B cell (primary cell): ENCODE measurements at regions of chr21 and their contacts with region 1.

Region 1: GRCh38 chr21:14864211-14865021 is 200.4 kb downstream of the NRIP1 start:
- DNase-seq: peak; percentile 41
- ATAC-seq: peak; percentile 72
- H3K4me3 ChIP-seq: no peak overlapping the region
- H3K4me3 Mint-ChIP-seq: no peak overlapping the region
- H3K27ac ChIP-seq: no peak overlapping the region
- H3K27ac Mint-ChIP-seq: no peak overlapping the region
- H3K4me1 ChIP-seq: peaks cover 13 to 17% of the 10 kb centered on the region in 2 donors
- H3K4me1 Mint-ChIP-seq: peaks cover 42% of the 10 kb centered on the region
- H3K27me3 ChIP-seq: no peaks in the 10 kb centered on the region
- H3K27me3 Mint-ChIP-seq: no peaks in the 10 kb centered on the region
- CTCF ChIP-seq: peak; percentile 47

Region 2: GRCh38 chr21:14403681-14404318 is 460.6 kb before region 1 on chr21:
- CTCF ChIA-PET with region 1: interaction called, 5 read pairs
- POLR2A ChIA-PET with region 1: no interaction called
- intact Hi-C with region 1: loop called (anchors 2 kb)
- DNase-seq: peak; percentile 64
- ATAC-seq: peak; percentile 51
- H3K4me3 ChIP-seq: no peak overlapping the region
- H3K4me3 Mint-ChIP-seq: no peak overlapping the region
- H3K27ac ChIP-seq: no peak overlapping the region
- H3K27ac Mint-ChIP-seq: no peak overlapping the region
- H3K4me1 ChIP-seq: no peaks in the 10 kb centered on the region
- H3K4me1 Mint-ChIP-seq: peaks cover 1% of the 10 kb centered on the region
- H3K27me3 ChIP-seq: no peaks in the 10 kb centered on the region
- H3K27me3 Mint-ChIP-seq: no peaks in the 10 kb centered on the region
- CTCF ChIP-seq: peak; percentile 78

Region 3: DNA sequence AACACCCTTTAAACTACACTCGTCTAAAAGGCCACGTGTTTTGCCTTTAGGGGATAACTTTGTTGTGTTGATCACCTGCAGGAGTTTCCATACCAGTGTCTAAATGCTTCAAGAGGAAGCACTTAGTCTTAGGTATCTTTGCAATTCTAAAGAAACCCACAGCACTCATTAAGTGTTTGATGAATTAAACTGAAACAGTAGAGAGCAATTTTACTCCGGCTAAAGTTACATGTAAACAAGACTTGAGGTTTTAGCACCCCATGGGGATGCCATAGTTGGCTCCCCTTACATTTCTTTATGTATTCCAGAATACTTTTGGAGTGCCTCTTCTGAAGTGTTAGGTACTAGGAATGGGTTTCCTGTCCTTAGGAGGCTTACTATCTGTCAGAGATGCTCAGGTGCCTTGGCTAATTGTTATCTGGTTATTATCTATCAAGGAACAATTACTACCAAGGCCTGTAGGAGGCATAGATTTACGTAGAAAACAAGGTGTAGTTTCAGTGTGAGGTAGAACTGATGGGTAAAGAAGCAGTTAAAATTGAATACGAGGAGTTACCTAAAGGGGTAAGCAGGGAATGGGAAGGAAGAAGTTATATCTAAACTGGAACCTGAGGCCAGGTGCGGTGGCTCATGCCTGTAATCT is 141.5 kb before region 1 on chr21:
- CTCF ChIA-PET with region 1: no interaction called
- POLR2A ChIA-PET with region 1: no interaction called
- intact Hi-C with region 1: no loop called
- DNase-seq: no peak
- ATAC-seq: no peak
- H3K4me3 ChIP-seq: no peak overlapping the region
- H3K4me3 Mint-ChIP-seq: no peak overlapping the region
- H3K27ac ChIP-seq: no peak overlapping the region
- H3K27ac Mint-ChIP-seq: no peak overlapping the region
- H3K4me1 ChIP-seq: no peaks in the 10 kb centered on the region
- H3K4me1 Mint-ChIP-seq: peaks cover 3% of the 10 kb centered on the region
- H3K27me3 ChIP-seq: no peaks in the 10 kb centered on the region
- H3K27me3 Mint-ChIP-seq: no peaks in the 10 kb centered on the region
- CTCF ChIP-seq: no peak

Region 4: GRCh38 chr21:15108801-15109200 is 244.4 kb after region 1 on chr21:
- CTCF ChIA-PET with region 1: no interaction called
- POLR2A ChIA-PET with region 1: no interaction called
- intact Hi-C with region 1: no loop called
- DNase-seq: no peak
- ATAC-seq: no peak
- H3K4me3 ChIP-seq: no peak overlapping the region
- H3K4me3 Mint-ChIP-seq: no peak overlapping the region
- H3K27ac ChIP-seq: no peak overlapping the region
- H3K27ac Mint-ChIP-seq: no peak overlapping the region
- H3K4me1 ChIP-seq: no peaks in the 10 kb centered on the region
- H3K4me1 Mint-ChIP-seq: no peaks in the 10 kb centered on the region
- H3K27me3 ChIP-seq: no peaks in the 10 kb centered on the region
- H3K27me3 Mint-ChIP-seq: no peaks in the 10 kb centered on the region
- CTCF ChIP-seq: no peak